Psoas muscle (tissue), 8 donors: ENCODE measurements at regions of chr22 and their contacts with region 1.

Region 1: GRCh38 chr22:17501679-17502285 is 61.5 kb upstream of the SLC25A18 start:
- DNase-seq: no peak
- ATAC-seq: peak; percentile 74 to 90 (median 78)
- H3K4me3 ChIP-seq: no peak overlapping the region
- H3K27ac ChIP-seq: peak overlapping the region; percentile 2
- H3K4me1 ChIP-seq: no peaks in the 10 kb centered on the region
- H3K27me3 ChIP-seq: no peaks in the 10 kb centered on the region
- CTCF ChIP-seq: peak; percentile 73

Region 2: DNA sequence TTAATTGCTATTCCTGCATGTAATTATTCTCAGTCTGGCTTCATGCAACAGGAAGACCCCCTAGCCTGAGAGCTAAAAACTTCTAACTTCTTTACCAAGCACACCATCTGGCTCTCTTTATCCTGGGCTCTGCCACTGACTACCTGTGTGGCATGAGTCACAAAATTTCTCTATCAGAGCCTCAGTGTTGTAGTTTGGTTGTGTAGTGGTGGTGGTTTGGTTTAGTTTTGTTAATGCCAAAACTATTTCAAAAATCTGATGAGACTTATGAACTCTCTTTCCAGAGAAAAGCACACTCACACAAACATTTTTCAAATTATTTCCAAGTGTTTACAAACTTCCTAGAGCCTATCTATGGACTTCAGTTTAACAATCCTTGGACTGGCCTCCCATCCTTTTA is 424.5 kb before region 1 on chr22:
- intact Hi-C with region 1: loop called in 1 of 2 experiments (anchors 10 kb)
- DNase-seq: no peak
- ATAC-seq: no peak
- H3K4me3 ChIP-seq: no peak overlapping the region
- H3K27ac ChIP-seq: no peak overlapping the region
- H3K4me1 ChIP-seq: no peaks in the 10 kb centered on the region
- H3K27me3 ChIP-seq: no peaks in the 10 kb centered on the region
- CTCF ChIP-seq: no peak

Region 3: DNA sequence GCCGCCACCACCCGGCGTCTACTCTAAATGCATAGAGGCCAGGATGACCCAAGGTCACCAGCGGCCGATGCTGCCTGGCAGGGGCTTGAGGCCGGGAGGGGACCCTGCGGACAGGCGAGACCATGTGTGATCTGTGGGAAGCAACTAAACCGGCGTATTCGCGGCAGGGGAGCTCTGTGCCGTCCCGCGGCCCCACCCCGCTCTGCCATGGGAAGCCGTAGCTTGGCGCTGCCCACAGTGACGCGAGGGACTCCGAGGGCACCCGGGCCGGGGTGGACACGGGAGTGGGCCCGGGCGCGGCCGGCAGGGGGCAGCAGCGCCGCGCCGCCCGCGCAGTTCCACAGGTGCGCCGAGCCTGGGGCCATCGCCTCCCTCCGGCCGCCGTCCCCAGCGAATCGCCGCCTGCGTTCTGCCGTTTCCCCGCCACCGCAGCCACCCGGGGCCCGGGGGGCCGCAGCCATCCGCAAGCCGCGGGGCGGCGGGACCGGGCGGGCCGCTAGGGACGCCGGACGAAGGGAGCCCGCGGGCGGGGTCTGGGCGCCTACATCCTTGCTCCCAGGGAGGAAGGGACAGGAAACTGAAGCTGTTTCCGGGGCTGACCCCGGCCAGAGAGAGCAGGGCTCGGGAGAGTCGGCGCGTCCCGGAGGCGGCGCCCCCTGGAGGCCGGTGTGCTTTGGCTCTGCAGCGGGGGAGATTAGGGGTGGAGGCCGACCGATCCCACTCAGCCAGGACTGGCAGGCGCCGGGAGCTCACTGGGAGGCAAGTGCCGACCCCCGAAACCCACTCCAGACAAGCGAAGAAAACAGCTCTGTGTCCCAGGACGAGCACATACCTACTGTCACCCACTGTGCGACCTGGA is 330.2 kb before region 1 on chr22:
- intact Hi-C with region 1: loop called (anchors 5 to 10 kb)
- DNase-seq: peak; percentile 93 to 96
- ATAC-seq: peak; percentile 90 to 97 (median 92)
- H3K4me3 ChIP-seq: peak overlapping the region; percentile 71
- H3K27ac ChIP-seq: peak overlapping the region; percentile 92
- H3K4me1 ChIP-seq: peaks cover 17% of the 10 kb centered on the region
- H3K27me3 ChIP-seq: no peaks in the 10 kb centered on the region
- CTCF ChIP-seq: peak; percentile 79

Region 4: DNA sequence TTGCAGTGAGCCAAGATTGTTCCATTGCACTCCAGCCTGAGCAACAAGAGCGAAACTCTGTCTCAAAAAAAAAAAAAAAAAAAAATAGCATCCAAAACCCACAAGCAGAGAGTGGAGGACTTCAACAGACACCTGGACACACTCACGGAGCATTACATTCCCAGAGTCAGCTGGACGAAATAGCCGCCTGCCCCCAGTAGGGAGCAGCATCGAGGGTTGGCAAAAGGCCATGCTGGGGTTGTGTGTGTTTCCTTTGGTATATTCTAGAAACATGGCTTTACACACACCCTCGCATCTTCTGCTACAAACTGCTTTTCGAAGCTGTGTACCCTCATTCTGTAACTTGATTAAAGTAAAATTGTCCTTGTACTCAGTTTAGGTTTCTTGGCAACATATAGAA is 287.8 kb before region 1 on chr22:
- intact Hi-C with region 1: loop called in 1 of 2 experiments (anchors 10 kb)
- DNase-seq: peak; percentile 68 to 83
- ATAC-seq: peak; percentile 68 to 89 (median 84)
- H3K4me3 ChIP-seq: no peak overlapping the region
- H3K27ac ChIP-seq: no peak overlapping the region
- H3K4me1 ChIP-seq: no peaks in the 10 kb centered on the region
- H3K27me3 ChIP-seq: no peaks in the 10 kb centered on the region
- CTCF ChIP-seq: peak; percentile 56